ENCODE measurements at regions of chr13 and their contacts with region 1.

Region 1: GRCh38 chr13:49495783-49496762 is at the start of gene PHF11:
- H3K4me3 Mint-ChIP-seq: peak within 1 kb of the TSS; percentile 97
- H3K27ac Mint-ChIP-seq: peak within 1 kb of the TSS; percentile 98
- H3K4me1 Mint-ChIP-seq: peaks cover 49% of the 10 kb centered on the region
- H3K27me3 Mint-ChIP-seq: no peaks in the 10 kb centered on the region

Region 2: DNA sequence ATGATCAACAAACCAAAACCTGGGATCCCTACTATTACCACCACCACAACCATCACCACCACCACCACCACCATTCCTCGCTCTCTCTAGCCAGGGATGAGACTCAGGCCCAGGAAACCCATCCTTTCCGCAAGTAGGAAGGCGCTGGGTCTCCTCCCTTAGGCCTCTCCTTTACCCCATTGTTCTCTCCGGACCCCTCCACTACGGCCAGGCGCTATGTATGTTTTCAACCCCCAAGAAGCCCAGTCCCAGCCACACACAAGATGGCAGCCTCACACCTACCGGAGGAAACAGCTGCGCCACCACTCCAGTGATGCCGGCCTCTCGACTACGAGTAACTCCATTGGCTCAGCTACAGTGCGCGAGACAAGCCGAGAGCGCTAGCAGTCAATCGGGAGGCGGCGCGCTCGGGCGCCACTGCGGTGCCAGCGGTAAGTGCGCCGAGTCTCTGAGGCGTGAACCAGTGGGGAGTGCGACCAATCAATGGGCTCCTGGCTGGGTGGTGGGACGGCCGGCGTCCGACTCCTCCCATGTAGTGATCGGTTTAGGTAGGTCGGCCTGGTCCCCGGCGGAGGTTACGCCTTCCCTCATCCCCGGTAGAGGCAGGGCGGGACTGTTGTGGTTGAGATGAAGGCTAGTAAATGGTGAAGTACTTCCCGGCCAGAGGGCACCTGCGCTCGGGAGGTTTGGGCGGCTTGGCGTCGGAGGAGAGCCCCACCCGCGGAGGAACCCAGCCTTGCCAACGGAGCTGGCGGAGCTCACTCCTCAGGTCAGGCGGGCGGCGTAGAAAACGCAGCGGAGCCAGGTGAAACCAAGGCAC is 52.2 kb before region 1 on chr13 and contains the starts of genes CAB39L and SETDB2:
- intact Hi-C with region 1: loop called (anchors 2 kb)
- H3K4me3 Mint-ChIP-seq: peak within 1 kb of the TSS; percentile 91
- H3K27ac Mint-ChIP-seq: peak within 1 kb of the TSS; percentile 94
- H3K4me1 Mint-ChIP-seq: peaks cover 26% of the 10 kb centered on the region
- H3K27me3 Mint-ChIP-seq: no peaks in the 10 kb centered on the region

Region 3: GRCh38 chr13:49550942-49551644 is 55.0 kb after region 1 on chr13:
- intact Hi-C with region 1: loop called (anchors 5 kb)
- H3K4me3 Mint-ChIP-seq: peak overlapping the region; percentile 58
- H3K27ac Mint-ChIP-seq: peak overlapping the region; percentile 93
- H3K4me1 Mint-ChIP-seq: peaks cover 43% of the 10 kb centered on the region
- H3K27me3 Mint-ChIP-seq: no peaks in the 10 kb centered on the region

Region 4: DNA sequence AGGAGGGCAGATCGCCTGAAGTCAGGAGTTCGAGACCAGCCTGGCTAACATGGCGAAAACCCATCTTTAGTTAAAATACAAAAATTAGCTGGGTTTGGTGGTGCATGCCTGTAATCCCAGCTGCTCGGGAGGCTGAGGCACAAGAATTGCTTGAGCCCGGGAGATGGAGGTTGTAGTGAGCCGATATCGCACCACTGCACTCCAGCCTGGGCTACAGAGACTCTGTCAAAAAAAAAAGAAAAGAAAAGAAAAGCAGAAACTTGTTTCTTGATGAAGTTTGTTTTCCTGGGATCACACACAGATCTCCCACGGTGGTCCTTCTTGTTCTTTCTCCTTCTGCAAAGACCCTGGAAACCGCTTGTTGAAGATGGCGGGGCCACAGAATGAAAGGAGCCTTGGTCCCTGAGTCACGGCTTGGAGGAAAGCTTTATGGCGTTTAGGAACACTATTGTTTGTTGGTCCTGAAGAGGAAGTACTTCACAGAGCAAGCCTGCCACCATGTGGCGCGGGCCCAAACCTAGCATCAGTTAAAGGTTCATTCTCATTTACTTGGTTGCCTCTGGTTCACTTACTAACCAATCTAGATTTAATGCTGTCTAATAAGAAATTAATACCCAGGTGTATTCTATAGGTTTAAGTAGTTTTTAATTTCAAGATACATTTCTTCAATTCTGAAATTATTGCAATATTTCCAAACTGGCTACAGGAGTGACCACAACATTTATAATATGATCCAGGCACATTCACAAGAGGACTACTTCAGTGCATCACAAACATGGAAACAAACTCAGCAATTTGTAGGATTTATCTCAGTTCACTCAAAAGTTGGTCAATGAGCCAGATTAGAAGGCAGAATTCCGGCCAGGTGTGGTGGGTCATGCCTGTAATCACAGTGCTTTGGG is 110.9 kb after region 1 on chr13:
- intact Hi-C with region 1: loop called (anchors 10 kb)
- H3K4me3 Mint-ChIP-seq: peak overlapping the region; percentile 64
- H3K27ac Mint-ChIP-seq: peak overlapping the region; percentile 66
- H3K4me1 Mint-ChIP-seq: peaks cover 13% of the 10 kb centered on the region
- H3K27me3 Mint-ChIP-seq: no peaks in the 10 kb centered on the region

Region 5: DNA sequence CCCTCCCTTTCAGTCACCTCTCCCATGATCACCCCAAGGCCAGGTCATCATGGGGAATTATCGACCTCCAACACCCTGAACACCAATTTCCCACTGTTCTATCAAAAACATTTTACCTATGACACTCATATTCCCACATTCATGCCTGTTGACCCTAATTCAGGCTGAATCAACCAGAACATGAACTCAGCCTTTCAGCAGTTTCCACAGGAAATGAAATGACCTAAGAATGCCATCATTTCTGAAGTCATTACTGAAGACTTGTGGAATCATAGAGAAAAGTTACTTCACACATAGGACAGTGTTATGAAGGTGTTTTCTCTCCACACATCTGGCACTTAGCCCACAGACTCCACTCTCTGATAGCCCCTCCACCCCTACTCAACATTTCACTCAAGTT is 1696.3 kb after region 1 on chr13:
- intact Hi-C with region 1: no loop called
- H3K4me3 Mint-ChIP-seq: no peak overlapping the region
- H3K27ac Mint-ChIP-seq: no peak overlapping the region
- H3K4me1 Mint-ChIP-seq: no peaks in the 10 kb centered on the region
- H3K27me3 Mint-ChIP-seq: no peaks in the 10 kb centered on the region